H1 (cell line): ENCODE measurements at regions of chr16 and their contacts with region 1.

Region 1: DNA sequence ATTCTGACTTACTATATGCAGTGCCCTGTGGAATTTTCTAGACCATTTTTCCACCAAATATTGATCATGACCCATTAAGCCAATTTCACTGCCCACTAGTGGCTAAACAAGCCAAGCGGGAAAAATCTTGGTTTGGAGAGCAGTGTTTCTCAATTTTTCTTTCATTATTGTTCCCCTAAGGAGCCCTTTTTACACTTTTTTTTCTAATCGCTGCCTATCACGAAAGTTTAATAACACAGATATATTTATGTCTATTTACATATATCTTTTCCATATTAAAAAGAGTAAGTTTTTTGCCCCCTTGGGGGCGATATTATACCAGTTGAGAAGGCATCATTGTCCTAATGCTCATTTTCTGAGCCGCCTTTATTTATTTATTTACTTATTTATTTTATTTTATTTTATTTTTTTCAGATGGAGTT is 10.8 kb upstream of the TLCD3B start:
- DNase-seq: no peak
- H3K4me3 ChIP-seq: no peak overlapping the region
- H3K27ac ChIP-seq: no peak overlapping the region
- H3K4me1 ChIP-seq: no peaks in the 10 kb centered on the region
- H3K27me3 ChIP-seq: peaks cover 0 to 6% (median 1%) of the 10 kb centered on the region in 4 experiments; a peak in 3 of 7 replicates
- CTCF ChIP-seq: peak in 2 of 3 experiments; percentile 1 to 41; a peak in 2 of 4 replicates
- EP300 ChIP-seq: no peak
- POLR2A ChIP-seq: no peak
- RAD21 ChIP-seq: peak; percentile 10 to 36; a peak in 2 of 4 replicates

Region 2: DNA sequence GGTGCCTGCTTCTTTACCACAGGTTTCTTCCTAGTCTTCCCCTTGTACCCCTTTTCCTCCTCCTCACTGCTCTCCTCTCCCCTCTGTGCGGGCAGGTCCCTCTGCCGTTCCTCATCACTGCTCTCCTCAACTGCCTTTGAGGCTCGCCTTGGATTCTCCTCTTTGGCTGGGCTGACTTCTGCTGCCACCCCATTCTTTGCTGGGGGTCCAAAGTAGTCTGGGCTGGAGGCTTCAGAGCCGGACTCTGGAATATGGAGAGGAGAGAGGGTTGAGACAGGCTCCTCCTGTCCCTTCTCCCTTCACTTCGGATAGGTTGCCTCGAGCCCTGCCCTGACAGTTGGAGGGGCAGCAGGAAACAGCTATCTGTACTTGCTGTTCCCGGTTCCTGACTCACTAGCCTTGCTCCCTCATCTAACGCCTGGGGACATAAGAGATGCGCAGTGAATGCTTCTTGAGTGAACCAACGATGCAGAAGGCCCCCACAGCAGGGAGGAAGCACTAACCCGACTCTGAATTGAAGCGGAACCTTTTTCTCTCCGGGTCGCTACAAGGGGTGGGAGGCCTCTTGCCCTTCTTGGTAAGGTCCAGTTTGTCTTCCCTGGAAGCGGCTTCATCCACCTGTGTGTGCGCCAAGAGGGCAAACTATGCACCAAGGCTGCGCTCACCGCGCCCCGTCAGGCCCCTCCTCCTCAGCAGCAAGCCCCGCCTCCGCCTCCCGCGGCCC is 47.1 kb before region 1 on chr16:
- CTCF ChIA-PET with region 1: no interaction called
- POLR2A ChIA-PET with region 1: no interaction called
- DNase-seq: peak in 1 of 2 experiments; percentile 90
- H3K4me3 ChIP-seq: peak overlapping the region; percentile 75 to 91 (median 80)
- H3K27ac ChIP-seq: peak overlapping the region; percentile 86
- H3K4me1 ChIP-seq: peaks cover 0 to 8% (median 3%) of the 10 kb centered on the region in 4 experiments; a peak in 4 of 7 replicates
- H3K27me3 ChIP-seq: no peaks in the 10 kb centered on the region
- CTCF ChIP-seq: no peak
- EP300 ChIP-seq: no peak
- POLR2A ChIP-seq: no peak; a peak in 1 of 3 replicates
- RAD21 ChIP-seq: no peak

Region 3: GRCh38 chr16:30052671-30053372 is 11.0 kb after region 1 on chr16:
- CTCF ChIA-PET with region 1: interaction called, 15 read pairs
- POLR2A ChIA-PET with region 1: interaction called, 3 read pairs
- DNase-seq: peak in 1 of 2 experiments; percentile 98
- H3K4me3 ChIP-seq: peak overlapping the region; percentile 68 to 80 (median 78)
- H3K27ac ChIP-seq: no peak overlapping the region
- H3K4me1 ChIP-seq: peaks cover 0 to 4% (median 2%) of the 10 kb centered on the region in 4 experiments; a peak in 3 of 7 replicates
- H3K27me3 ChIP-seq: peaks cover 0 to 5% (median 2%) of the 10 kb centered on the region in 4 experiments; a peak in 2 of 7 replicates
- CTCF ChIP-seq: no peak
- EP300 ChIP-seq: peak in 1 of 2 experiments; percentile 51; a peak in 1 of 3 replicates
- POLR2A ChIP-seq: no peak
- RAD21 ChIP-seq: no peak